ENCODE measurements at regions of chr2 and their contacts with region 1.

Region 1: DNA sequence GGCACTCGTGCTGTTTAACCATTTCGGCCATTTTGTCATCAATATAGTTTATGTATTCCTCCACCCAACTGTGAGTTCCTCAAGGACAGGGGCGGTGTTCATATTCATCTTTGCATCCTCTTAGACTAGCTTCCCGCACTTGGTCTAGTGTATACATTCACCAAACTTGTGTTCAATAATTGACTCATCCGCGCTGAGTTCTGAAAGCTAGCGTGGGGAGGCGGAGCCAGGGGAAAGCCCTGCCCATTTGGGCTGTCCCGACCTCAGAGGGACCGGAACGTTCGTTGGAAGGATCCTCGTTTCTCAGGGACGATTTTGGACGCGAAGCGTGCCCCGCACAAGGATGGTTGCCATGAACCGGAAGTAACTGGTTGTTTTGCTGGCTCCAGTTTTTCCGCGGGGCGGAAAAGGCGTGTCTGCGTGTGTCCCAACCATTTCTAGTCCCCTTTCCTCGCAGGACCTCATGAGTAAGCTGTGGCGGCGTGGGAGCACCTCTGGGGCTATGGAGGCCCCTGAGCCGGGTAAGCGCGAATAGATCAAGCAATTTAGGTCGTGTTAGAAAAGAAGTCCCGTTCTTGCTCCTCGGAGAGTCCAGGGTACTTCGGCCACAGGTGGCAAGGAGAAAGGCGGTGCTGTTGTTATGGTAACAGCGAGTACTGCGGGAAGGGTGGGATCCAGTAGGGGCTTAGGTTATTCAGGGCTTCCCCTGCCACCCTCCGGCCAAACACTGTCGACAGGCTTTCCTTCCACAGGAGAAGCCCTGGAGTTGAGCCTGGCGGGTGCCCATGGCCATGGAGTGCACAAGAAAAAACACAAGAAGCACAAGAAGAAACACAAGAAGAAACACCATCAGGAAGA is at the start of gene INO80B:
- DNase-seq: peak; percentile 99
- ATAC-seq: peak; percentile 74
- H3K4me3 ChIP-seq: peak within 1 kb of the TSS; percentile 61
- H3K27ac ChIP-seq: peak within 1 kb of the TSS; percentile 21
- H3K4me1 ChIP-seq: peaks cover 10% of the 10 kb centered on the region
- H3K27me3 ChIP-seq: no peaks in the 10 kb centered on the region
- CTCF ChIP-seq: no peak
- POLR2A ChIP-seq: no peak
- RAD21 ChIP-seq: peak; percentile 1; the same call in 1 of the 2 replicates
- total RNA-seq, gene INO80B: 4.5 and 5.3 TPM in 2 replicates

Region 2: GRCh38 chr2:74440378-74441169 is 14.3 kb before region 1 on chr2:
- CTCF ChIA-PET with region 1: no interaction called
- POLR2A ChIA-PET with region 1: interaction called, 4 read pairs
- dilution Hi-C with region 1: no loop called
- in situ Hi-C with region 1: no loop called
- intact Hi-C with region 1: loop called (anchors 1 kb)
- DNase-seq: peak; percentile 81
- ATAC-seq: peak; percentile 98
- H3K4me3 ChIP-seq: peak overlapping the region; percentile 48
- H3K27ac ChIP-seq: peak overlapping the region; percentile 70
- H3K4me1 ChIP-seq: peaks cover 23% of the 10 kb centered on the region
- H3K27me3 ChIP-seq: peaks cover 4% of the 10 kb centered on the region; the same call in 1 of the 2 replicates
- CTCF ChIP-seq: 0 out of 2 replicates have a peak, but pooled peaks have one; percentile 20
- POLR2A ChIP-seq: peak; percentile 42; the same call in 1 of the 2 replicates
- RAD21 ChIP-seq: no peak

Measured in IMR-90 (cell line).